Stomach (tissue), 19 donors: ENCODE measurements at regions of chr11 and their contacts with region 1.

Region 1: DNA sequence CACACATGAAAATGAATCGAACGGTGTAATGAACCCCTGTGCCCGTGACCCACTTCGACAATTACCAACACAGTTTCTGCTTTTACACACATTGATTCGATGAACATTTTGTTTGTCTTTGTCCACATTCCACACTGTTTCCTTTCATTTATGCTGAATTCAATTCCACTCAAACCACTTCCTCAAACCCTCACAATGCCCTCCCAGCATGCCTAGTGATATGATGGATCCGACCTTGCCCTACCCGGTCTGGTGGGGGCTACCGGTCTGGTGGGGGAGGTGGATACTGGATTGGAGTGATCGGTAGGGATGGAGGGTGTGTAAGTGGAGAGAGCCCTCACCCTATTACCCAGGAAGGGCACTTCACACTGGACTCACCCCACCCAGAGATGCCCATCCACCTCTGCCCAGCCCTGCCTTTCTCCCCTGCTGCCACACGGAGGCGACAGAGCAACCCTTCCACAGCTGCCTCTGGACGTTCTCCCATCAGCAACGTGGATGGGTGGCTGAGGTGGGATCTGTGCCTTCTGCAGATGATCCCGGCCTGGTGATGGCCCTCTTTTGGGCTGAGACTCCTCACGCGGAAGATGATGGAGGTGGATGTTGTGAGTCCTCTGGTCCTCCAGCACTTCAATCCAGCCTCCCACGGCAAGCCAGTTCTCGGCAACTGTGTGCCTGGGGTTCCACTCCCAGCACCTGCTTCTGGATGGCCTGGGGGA is 33.0 kb upstream of the P2RY2 start:
- DNase-seq: peak; percentile 75 to 83
- H3K4me3 ChIP-seq: no peak overlapping the region
- H3K27ac ChIP-seq: no peak overlapping the region
- H3K4me1 ChIP-seq: peaks cover 0 to 46% (median 4%) of the 10 kb centered on the region in 4 donors
- H3K27me3 ChIP-seq: peaks cover 0 to 10% (median 0%) of the 10 kb centered on the region in 3 donors
- CTCF ChIP-seq: peak in 5 of 7 experiments; percentile 80 to 91 (median 85)
- EP300 ChIP-seq: no peak
- POLR2A ChIP-seq: no peak

Region 2: GRCh38 chr11:72996959-72997358 is 188.2 kb before region 1 on chr11:
- intact Hi-C with region 1: no loop called
- DNase-seq: no peak
- H3K4me3 ChIP-seq: no peak overlapping the region
- H3K27ac ChIP-seq: no peak overlapping the region
- H3K4me1 ChIP-seq: peaks cover 0 to 14% (median 4%) of the 10 kb centered on the region in 4 donors
- H3K27me3 ChIP-seq: no peaks in the 10 kb centered on the region
- CTCF ChIP-seq: no peak
- EP300 ChIP-seq: no peak
- POLR2A ChIP-seq: no peak

Region 3: DNA sequence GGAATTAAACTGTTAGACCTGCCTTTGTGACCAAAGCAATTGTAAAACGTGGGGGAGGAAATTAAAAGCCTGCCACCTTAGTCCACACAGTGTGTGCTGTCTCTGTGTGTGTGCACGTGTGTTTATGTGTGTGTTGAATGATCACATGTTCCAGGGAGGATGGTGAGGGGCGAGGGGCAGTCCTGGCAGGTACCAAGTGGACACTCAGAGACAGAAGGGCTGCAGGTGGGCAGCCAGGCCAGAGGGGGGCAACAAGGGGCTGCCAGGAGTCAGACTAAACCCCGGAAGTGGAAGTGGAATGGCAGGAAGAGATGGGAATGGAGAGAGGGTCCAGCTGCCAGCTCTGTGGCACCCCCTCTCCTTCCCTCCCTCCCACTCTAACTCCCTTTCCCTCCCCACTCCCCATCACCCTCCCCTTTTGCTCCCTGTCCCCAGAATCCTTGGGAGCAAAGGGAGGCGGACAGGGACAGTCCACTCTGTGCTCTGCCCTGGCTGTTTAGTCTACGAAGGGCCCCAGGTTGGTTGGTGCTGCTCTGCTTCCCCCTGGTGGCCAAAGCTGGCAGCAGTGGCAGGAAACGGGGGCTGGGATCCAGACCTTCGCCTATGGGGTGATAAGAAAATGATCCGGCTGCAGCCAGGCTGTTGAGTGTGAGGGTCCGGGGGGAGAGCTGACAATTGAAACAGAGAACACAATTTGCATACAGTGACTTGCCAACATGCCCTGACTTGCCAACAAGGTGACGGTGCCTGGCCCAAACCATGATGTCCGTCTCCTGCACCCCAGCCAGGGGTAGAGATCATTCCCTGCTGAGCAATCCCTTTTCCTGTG is 57.4 kb after region 1 on chr11:
- intact Hi-C with region 1: loop called (anchors 2 kb)
- DNase-seq: peak; percentile 82 to 91
- H3K4me3 ChIP-seq: peak overlapping the region in 3 of 4 donors; percentile 7 to 28 (median 7)
- H3K27ac ChIP-seq: no peak overlapping the region
- H3K4me1 ChIP-seq: peaks cover 0 to 23% (median 9%) of the 10 kb centered on the region in 4 donors
- H3K27me3 ChIP-seq: no peaks in the 10 kb centered on the region
- CTCF ChIP-seq: peak in 5 of 7 experiments; percentile 78 to 91 (median 83)
- EP300 ChIP-seq: no peak
- POLR2A ChIP-seq: no peak